ENCODE measurements at regions of chr11 and their contacts with region 1.

Region 1: GRCh38 chr11:119673759-119674336 is 55.2 kb downstream of the NECTIN1 start:
- DNase-seq: peak; percentile 88
- ATAC-seq: peak; percentile 95
- H3K4me3 ChIP-seq: no peak overlapping the region
- H3K27ac ChIP-seq: peak overlapping the region; percentile 85
- H3K4me1 ChIP-seq: peaks cover 29% of the 10 kb centered on the region
- H3K27me3 ChIP-seq: no peaks in the 10 kb centered on the region
- CTCF ChIP-seq: peak; percentile 54 to 96 (median 67); a peak in 4 of 6 replicates
- EP300 ChIP-seq: peak; percentile 71 to 96
- POLR2A ChIP-seq: peak; percentile 62; the same call in 1 of the 2 replicates
- RAD21 ChIP-seq: peak; percentile 85

Region 2: DNA sequence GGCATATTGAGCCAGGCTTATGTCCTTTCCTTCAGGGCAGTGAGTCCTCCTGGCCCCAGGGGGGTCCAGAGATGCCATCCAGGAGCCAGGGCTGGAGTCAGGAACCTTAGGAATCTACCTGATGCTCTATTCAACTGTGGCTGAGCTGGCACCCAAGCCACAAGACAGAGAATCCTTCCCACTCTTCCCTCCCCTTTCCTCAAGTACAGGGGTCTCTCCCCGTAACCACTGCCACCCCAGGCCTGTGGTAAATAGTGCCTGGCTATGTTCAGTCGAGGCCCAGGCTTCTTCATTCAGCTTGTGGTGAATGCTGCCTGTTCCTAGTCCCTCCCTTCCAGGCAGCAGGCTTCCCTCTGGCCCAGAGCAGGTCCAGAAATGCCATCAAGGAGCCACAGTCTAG is 205.3 kb before region 1 on chr11:
- CTCF ChIA-PET with region 1: no interaction called
- POLR2A ChIA-PET with region 1: no interaction called
- RAD21 ChIA-PET with region 1: no interaction called
- SMC1A ChIA-PET with region 1: no interaction called
- in situ Hi-C with region 1: no loop called
- intact Hi-C with region 1: no loop called
- DNase-seq: no peak
- ATAC-seq: no peak
- H3K4me3 ChIP-seq: no peak overlapping the region
- H3K27ac ChIP-seq: no peak overlapping the region
- H3K4me1 ChIP-seq: no peaks in the 10 kb centered on the region
- H3K27me3 ChIP-seq: peaks cover 0 to 1% of the 10 kb centered on the region in 2 experiments; a peak in 1 of 4 replicates
- CTCF ChIP-seq: no peak
- EP300 ChIP-seq: no peak
- POLR2A ChIP-seq: no peak
- RAD21 ChIP-seq: no peak

Region 3: GRCh38 chr11:119684361-119685110 is 10.7 kb after region 1 on chr11:
- CTCF ChIA-PET with region 1: interaction called, 15 read pairs
- POLR2A ChIA-PET with region 1: interaction called, 5 read pairs
- RAD21 ChIA-PET with region 1: interaction called, 10 read pairs
- SMC1A ChIA-PET with region 1: interaction called, 18 read pairs
- in situ Hi-C with region 1: no loop called
- intact Hi-C with region 1: no loop called
- DNase-seq: no peak
- ATAC-seq: no peak
- H3K4me3 ChIP-seq: no peak overlapping the region
- H3K27ac ChIP-seq: no peak overlapping the region
- H3K4me1 ChIP-seq: peaks cover 5% of the 10 kb centered on the region
- H3K27me3 ChIP-seq: no peaks in the 10 kb centered on the region
- CTCF ChIP-seq: no peak
- EP300 ChIP-seq: no peak
- POLR2A ChIP-seq: no peak
- RAD21 ChIP-seq: no peak

Region 4: DNA sequence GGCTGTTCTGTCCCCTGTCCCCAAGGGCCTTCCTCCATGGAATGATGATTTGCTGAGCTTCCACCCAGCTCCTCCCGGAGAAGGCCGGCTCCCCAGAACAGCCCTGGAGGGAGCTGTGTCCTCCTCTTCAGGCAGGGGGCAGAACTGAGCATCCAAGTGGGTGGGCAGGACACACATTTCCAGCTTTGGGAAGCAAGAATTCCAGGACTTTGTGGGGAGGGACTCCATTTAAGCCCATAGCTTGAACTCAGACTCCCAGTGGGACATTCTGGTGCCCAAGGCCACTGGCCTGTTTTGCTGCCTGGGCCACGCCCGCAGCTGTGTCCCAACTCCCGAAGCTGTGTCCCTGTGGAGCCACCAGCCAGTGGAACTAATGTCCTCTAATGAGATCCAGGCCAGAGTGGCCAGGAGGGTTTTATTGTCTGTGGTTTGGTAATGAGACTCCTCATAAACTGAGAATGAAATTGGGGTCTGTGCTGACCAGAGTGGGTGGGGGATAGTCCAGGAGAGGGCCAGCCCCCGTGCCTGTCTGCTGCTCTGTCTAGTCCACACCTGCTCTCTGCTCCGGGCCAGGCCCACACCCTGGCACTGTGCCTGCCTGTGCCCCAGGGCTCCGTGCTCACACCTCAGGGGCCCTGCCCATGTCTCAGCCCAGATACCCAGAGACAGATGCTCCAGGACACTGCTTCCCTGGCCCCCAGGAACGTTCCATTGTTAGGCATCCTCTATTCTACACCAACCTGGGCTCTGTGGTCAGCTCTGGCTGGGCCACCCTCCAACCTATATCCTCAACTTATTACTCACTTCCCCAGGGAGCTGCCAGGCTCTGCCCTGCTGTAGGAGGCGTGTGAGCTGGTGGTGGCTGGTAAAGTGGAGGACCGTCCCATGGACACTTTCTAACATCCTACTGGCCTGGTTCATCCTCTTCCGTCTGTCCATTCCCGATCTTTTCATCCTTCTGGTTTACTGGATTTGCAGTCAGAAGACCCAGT is 47.6 kb after region 1 on chr11:
- CTCF ChIA-PET with region 1: interaction called, 214 read pairs
- POLR2A ChIA-PET with region 1: interaction called, 74 read pairs
- RAD21 ChIA-PET with region 1: interaction called, 192 read pairs
- SMC1A ChIA-PET with region 1: interaction called, 76 read pairs
- in situ Hi-C with region 1: no loop called
- intact Hi-C with region 1: no loop called
- DNase-seq: no peak
- ATAC-seq: no peak; the same call in 2 of the 3 replicates
- H3K4me3 ChIP-seq: no peak overlapping the region
- H3K27ac ChIP-seq: no peak overlapping the region
- H3K4me1 ChIP-seq: peaks cover 15% of the 10 kb centered on the region
- H3K27me3 ChIP-seq: no peaks in the 10 kb centered on the region
- CTCF ChIP-seq: peak; percentile 23 to 39 (median 36); a peak in 4 of 6 replicates
- EP300 ChIP-seq: no peak
- POLR2A ChIP-seq: no peak
- RAD21 ChIP-seq: no peak

Region 5: GRCh38 chr11:119752345-119752871 is 78.6 kb after region 1 on chr11:
- CTCF ChIA-PET with region 1: interaction called, 21 read pairs
- POLR2A ChIA-PET with region 1: interaction called, 18 read pairs
- RAD21 ChIA-PET with region 1: interaction called, 34 read pairs
- SMC1A ChIA-PET with region 1: interaction called, 14 read pairs
- in situ Hi-C with region 1: no loop called
- intact Hi-C with region 1: no loop called
- DNase-seq: no peak
- ATAC-seq: peak; percentile 80
- H3K4me3 ChIP-seq: peak overlapping the region; percentile 62
- H3K27ac ChIP-seq: peak overlapping the region; percentile 90
- H3K4me1 ChIP-seq: peaks cover 21% of the 10 kb centered on the region
- H3K27me3 ChIP-seq: no peaks in the 10 kb centered on the region
- CTCF ChIP-seq: peak in 1 of 3 experiments; percentile 20; a peak in 1 of 6 replicates
- EP300 ChIP-seq: no peak
- POLR2A ChIP-seq: no peak
- RAD21 ChIP-seq: peak; percentile 31; the same call in 1 of the 2 replicates

Region 6: DNA sequence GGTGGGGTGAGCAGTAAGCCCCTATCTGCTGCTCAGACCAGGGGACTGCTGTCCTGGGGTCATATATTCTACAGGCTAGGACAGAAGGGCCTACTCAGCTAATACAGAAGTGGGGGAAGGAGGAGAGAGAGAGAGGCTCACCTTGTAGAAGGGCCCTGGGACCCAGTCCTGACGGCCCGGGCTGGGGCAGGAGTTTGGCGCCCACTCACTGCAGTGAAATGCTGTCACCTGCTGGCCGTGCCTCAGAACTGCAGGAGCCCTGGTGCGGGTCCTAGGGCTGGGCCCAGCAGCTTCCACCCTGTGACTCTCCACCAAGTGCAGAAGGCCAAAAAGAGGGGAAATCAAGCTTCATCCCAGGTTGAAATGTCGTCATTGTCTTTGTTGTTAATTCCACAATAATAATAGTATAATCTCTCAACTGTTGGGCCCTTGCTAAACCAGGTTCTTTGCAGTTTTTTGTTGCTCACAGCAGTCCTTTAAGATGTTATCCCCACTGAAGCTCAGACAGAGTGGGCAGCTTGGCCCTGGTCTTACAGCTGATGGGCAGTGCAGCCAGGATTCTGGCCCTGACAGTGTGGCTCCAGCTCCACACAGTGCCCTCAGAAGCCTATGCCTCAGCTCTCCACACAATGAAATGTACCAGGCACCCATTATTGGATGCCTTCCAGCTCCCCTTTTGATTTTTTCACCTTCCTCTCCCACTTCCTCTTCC is 434.5 kb after region 1 on chr11:
- CTCF ChIA-PET with region 1: interaction called, 25 read pairs
- POLR2A ChIA-PET with region 1: no interaction called
- RAD21 ChIA-PET with region 1: interaction called, 19 read pairs
- SMC1A ChIA-PET with region 1: interaction called, 10 read pairs
- in situ Hi-C with region 1: loop called (anchors 5 kb)
- intact Hi-C with region 1: no loop called
- DNase-seq: no peak
- ATAC-seq: peak; percentile 97
- H3K4me3 ChIP-seq: no peak overlapping the region
- H3K27ac ChIP-seq: no peak overlapping the region
- H3K4me1 ChIP-seq: no peaks in the 10 kb centered on the region
- H3K27me3 ChIP-seq: peaks cover 12 to 15% of the 10 kb centered on the region in 2 experiments
- CTCF ChIP-seq: peak; percentile 99 to 100 (median 99); a peak in 5 of 6 replicates
- EP300 ChIP-seq: no peak
- POLR2A ChIP-seq: no peak
- RAD21 ChIP-seq: peak; percentile 94

Region 7: DNA sequence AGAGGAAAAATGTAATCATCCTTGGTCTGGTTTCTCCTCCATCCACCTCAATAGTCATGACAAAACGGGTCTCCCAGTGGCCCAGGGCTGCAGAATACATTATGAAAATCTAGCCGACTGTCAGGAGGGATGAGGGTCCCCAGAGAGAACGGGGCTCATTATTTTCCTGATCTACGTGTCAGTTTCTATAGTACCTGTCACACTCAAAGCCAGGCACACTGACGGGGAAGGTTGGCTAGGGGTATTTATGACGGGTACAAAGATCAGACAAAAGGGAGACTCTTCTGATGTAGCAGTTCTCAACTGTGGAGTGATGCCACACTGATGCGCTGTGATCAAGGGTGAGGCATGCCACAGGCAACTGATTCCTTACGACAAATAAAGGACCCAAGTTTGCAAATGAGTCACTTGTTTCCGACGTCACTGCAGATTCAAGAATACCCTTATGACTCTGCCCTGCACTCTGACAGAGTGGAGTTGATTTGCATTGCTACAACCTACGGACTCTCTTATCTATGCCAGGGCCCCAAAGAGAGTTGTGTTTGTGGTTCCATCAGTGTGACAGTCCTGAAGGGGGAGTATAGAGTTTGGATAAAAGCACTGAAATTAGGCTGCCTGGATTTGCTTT is 1161.9 kb after region 1 on chr11:
- CTCF ChIA-PET with region 1: no interaction called
- POLR2A ChIA-PET with region 1: no interaction called
- RAD21 ChIA-PET with region 1: no interaction called
- SMC1A ChIA-PET with region 1: no interaction called
- in situ Hi-C with region 1: no loop called
- intact Hi-C with region 1: no loop called
- DNase-seq: peak; percentile 63
- ATAC-seq: peak; percentile 95
- H3K4me3 ChIP-seq: no peak overlapping the region
- H3K27ac ChIP-seq: no peak overlapping the region
- H3K4me1 ChIP-seq: peaks cover 21% of the 10 kb centered on the region
- H3K27me3 ChIP-seq: no peaks in the 10 kb centered on the region
- CTCF ChIP-seq: 0 out of 6 replicates have a peak, but pooled peaks of 1 of the 3 experiments have one; percentile 15
- EP300 ChIP-seq: peak in 1 of 2 experiments; percentile 89; a peak in 3 of 4 replicates
- POLR2A ChIP-seq: no peak
- RAD21 ChIP-seq: no peak

Measured in GM12878 (cell line).